ENCODE measurements at regions of chr7 and their contacts with region 1.

Region 1: GRCh38 chr7:97027427-97028234 is 3.0 kb upstream of the DLX5 start:
- DNase-seq: peak; percentile 34
- H3K4me3 Mint-ChIP-seq: peak overlapping the region; percentile 20
- H3K27ac Mint-ChIP-seq: no peak overlapping the region
- H3K4me1 Mint-ChIP-seq: peaks cover 22% of the 10 kb centered on the region
- H3K27me3 Mint-ChIP-seq: peaks cover 68% of the 10 kb centered on the region

Region 2: DNA sequence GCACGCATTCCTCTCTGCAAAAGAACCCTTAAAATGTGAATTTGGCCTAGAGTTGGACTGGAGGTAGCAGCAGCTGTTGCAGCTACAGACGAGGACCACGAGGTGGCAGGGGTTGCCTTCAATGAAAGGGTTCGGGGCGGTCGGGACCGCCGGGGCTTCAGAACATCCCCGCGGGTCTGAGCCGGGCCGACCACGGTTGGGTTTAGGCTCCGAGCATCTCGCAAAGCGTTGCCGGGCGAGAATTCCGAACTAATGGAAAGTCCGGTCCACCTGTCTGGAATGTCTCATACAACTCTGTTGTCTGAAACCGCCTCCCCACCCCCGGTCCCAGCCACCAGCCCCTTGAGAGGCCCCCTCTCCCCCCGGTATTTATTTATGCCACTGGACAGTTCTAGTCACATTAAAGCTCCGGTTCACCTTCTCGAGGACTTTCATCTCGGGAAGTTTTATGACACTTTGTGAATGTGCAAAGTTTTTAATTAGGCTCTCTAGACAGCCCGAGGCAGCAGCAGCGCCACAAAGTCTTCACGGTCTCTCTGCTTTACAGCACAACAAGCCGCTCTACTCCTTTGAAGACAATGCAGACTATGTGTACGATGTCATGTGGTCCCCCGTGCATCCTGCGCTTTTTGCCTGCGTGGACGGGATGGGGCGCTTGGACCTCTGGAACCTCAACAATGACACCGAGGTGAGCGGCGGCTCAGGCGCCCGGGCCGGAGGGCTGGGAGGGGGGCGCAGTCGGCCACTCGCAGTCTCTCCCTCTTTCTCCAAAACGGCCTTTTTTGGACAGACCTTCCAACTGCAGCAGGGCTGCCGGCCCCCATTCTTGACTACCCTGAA is 951.9 kb before region 1 on chr7:
- intact Hi-C with region 1: loop called (anchors 1 kb)
- DNase-seq: peak; percentile 14
- H3K4me3 Mint-ChIP-seq: peak overlapping the region; percentile 80
- H3K27ac Mint-ChIP-seq: no peak overlapping the region
- H3K4me1 Mint-ChIP-seq: peaks cover 9% of the 10 kb centered on the region
- H3K27me3 Mint-ChIP-seq: peaks cover 53% of the 10 kb centered on the region

Region 3: GRCh38 chr7:96414931-96415292 is 612.7 kb before region 1 on chr7:
- intact Hi-C with region 1: loop called (anchors 1 kb)
- DNase-seq: peak; percentile 30
- H3K4me3 Mint-ChIP-seq: no peak overlapping the region
- H3K27ac Mint-ChIP-seq: no peak overlapping the region
- H3K4me1 Mint-ChIP-seq: no peaks in the 10 kb centered on the region
- H3K27me3 Mint-ChIP-seq: peaks cover 10% of the 10 kb centered on the region

Region 4: GRCh38 chr7:96993094-96993865 is 34.4 kb before region 1 on chr7:
- intact Hi-C with region 1: loop called (anchors 5 kb)
- DNase-seq: no peak
- H3K4me3 Mint-ChIP-seq: no peak overlapping the region
- H3K27ac Mint-ChIP-seq: no peak overlapping the region
- H3K4me1 Mint-ChIP-seq: no peaks in the 10 kb centered on the region
- H3K27me3 Mint-ChIP-seq: peaks cover 89% of the 10 kb centered on the region

Region 5: DNA sequence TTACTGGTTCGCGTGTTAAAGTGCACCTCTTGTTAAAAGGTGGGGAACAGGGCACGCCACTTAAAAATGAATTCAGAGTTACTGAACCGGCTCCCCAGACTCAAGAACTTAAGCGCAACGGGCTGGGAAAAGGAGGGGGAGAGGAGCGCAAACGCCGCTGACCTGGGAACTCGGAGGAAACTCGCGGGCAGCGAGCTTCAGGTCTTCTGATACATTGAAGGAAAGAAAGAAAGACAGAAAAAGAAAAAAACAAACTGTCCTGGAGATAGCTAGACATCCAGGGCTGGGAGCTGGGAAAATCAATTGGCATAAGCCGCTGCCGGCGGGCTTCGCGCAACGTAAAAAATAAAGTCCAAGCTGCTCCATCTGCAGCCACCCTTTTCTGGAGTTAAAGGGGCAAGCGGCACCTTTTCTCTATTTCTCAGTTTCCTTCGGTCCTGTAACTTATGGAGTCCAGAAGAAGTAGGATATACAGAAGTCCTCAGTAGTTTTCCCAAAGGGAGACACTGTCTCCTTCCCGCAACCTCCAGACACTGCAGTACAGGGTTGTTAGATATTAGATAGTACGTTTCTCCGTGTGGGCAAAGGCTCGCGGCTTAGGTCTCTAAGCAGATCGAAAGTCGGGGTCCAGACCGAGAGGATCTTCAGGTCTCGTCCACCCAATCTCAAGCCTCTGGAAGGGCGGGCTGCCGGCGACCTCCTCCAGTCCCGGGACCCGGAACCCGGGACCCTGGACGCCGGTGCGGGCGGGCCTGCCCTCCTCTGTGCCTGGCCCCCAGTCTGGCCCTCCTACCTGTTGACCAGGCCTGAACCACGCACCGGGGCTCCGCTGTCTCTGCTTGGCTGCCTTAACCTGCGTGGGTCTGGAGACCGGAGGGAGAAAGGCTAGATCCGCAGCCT is 24.0 kb before region 1 on chr7:
- intact Hi-C with region 1: loop called (anchors 1 kb)
- DNase-seq: no peak
- H3K4me3 Mint-ChIP-seq: no peak overlapping the region
- H3K27ac Mint-ChIP-seq: peak overlapping the region; percentile 43
- H3K4me1 Mint-ChIP-seq: no peaks in the 10 kb centered on the region
- H3K27me3 Mint-ChIP-seq: peaks cover 84% of the 10 kb centered on the region

Region 6: DNA sequence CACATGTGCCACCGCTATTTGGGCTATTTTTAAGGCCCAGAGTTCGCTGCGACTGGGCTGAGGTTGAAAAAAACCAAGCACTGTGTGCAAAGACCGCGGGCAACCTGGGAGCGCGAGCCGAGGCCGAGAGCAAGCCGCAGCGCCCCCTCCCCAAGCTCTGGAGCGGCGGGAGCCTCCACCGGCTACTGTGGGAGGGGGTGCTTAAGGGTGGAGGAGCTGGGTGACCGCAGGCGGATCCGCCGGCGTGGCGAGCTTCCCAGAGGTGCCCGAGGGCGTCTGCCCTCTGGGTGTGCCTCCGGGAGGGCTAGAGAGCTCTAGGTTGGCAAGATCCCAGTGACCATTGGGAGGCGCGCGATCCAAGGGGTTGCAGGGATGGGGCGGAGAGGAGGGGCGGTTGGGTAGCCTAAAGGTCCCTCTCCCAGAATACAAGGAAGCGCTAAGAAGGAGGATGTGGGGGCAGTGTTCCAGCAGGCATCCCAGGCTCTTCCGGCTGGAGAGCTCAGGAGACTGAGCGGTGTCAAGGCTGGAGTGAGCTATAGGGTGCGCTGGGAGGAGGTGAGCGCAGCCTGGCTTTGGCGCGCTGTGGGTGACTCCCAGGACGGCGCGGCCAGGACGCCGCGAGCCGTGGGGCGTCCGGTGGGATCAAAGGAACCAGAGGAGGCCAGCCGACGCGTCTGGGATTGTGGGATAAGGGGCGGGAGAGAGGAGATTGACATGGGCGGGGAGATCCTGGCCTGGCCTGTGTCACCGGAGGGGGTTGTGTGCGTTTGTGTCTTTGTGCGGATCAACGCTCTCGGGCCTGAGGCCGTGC is 11.0 kb before region 1 on chr7:
- intact Hi-C with region 1: loop called (anchors 1 kb)
- DNase-seq: no peak
- H3K4me3 Mint-ChIP-seq: no peak overlapping the region
- H3K27ac Mint-ChIP-seq: no peak overlapping the region
- H3K4me1 Mint-ChIP-seq: no peaks in the 10 kb centered on the region
- H3K27me3 Mint-ChIP-seq: peaks cover 86% of the 10 kb centered on the region

Measured in activated T-helper 1 cell treated with anti-CD3 and anti-CD28 coated beads, Interleukin-12 subunit alpha, Interleukin-12 subunit beta, Interleukin-2, Interleukin-4 antibody, amounts not matched to agents 30 ng/mL and 10 ng/mL and 1 ng/mL, durations not matched to agents 14 hours and 24 hours and 36 hours (primary cell).